Aorta (tissue), 5 donors: ENCODE measurements at regions of chr17 and their contacts with region 1.

Region 1: DNA sequence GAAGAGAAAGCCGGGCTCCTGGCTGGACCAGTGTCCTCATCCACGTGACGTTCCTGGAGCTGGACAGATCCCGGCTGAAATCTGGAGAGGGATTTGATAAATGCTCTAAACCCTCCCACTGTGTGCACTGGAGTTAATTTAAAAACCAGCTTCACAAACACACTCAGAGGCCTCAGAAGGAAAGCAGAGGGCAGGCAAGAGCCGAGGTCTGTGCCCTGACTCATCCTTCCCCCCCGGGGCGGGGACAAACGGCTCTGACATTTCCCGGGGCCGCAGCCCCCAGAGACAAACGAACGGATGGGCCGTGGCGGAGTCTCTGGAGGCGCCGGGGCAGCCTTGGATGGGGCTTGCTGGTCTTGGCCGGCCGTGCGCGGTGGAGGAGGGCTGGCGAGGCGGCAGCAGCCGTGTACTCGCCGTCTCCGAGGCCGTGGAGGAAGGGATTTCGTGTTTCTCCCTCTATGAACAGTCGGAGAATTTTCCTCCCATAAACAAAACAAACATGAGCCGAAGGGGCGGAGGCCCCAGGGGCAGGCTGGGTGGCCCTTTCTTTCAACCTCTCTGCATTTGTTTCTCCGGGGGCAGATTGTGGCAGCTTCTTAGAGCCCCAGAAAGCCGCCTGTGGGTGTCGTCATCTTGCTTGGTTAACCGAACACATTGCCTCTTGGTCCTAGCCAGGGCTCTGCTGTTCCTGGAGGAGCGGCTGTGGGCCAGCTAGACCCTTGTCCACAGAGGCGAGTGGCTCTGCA is 94.3 kb downstream of the NTN1 start:
- DNase-seq: peak; percentile 84 to 95
- ATAC-seq: peak; percentile 90
- H3K4me3 ChIP-seq: peak overlapping the region in 1 of 2 donors; percentile 41
- H3K27ac ChIP-seq: peak overlapping the region; percentile 54 to 96
- H3K4me1 ChIP-seq: no peaks in the 10 kb centered on the region
- H3K27me3 ChIP-seq: no peaks in the 10 kb centered on the region

Region 2: GRCh38 chr17:9021158-9021991 is 94.2 kb before region 1 on chr17 and contains the start of gene NTN1:
- intact Hi-C with region 1: no loop called
- DNase-seq: peak; percentile 66 to 89
- ATAC-seq: peak; percentile 85
- H3K4me3 ChIP-seq: peak within 1 kb of the TSS; percentile 62 to 95
- H3K27ac ChIP-seq: peak within 1 kb of the TSS; percentile 19 to 31
- H3K4me1 ChIP-seq: no peaks in the 10 kb centered on the region
- H3K27me3 ChIP-seq: no peaks in the 10 kb centered on the region
- total RNA-seq, gene NTN1: 56.5 to 90.4 TPM

Region 3: DNA sequence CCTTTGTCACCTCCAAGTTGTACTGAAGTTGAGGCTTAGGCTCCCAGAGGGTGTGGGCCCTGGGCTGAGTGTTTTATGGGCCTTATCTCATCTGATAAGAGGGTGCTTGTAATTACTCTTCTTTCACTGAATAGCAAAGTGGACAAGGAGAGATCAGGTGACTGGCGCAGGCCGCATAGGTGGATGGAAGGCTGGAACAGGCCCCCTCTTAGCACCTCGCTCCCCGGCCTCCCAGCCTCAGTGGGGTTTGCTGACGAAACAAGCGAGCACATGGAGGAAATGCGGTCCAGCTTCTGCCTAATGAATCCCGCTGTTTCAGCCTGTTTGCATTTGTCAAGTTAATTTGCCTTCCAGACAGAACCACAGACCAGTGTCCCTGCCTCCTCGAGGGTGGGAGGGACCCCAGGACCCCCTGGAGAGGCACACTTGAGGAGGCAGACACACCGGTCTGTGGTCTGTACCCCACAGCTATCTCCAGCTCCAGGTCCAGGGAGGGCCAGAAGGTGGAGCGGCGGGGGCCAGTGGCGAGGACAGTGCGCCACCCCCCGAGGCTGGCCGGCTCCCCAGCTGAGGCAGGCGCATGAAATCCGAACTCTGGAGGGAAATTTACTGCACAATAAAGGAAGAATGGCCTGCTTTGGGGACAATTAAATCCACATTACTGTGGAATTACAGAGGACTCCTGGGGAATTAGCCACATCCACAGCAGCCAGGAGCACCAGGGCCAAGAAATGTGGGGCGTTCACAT is 29.1 kb after region 1 on chr17:
- intact Hi-C with region 1: loop called in 1 of 2 experiments (anchors 2 kb)
- DNase-seq: no peak
- ATAC-seq: no peak
- H3K4me3 ChIP-seq: no peak overlapping the region
- H3K27ac ChIP-seq: no peak overlapping the region
- H3K4me1 ChIP-seq: peaks cover 0 to 6% of the 10 kb centered on the region in 2 donors
- H3K27me3 ChIP-seq: no peaks in the 10 kb centered on the region

Region 4: GRCh38 chr17:9150446-9151090 is 34.9 kb after region 1 on chr17:
- intact Hi-C with region 1: loop called (anchors 2 to 5 kb)
- DNase-seq: peak in 1 of 2 donors; percentile 83
- ATAC-seq: peak; percentile 62
- H3K4me3 ChIP-seq: no peak overlapping the region
- H3K27ac ChIP-seq: peak overlapping the region; percentile 17 to 72
- H3K4me1 ChIP-seq: peaks cover 0 to 6% of the 10 kb centered on the region in 2 donors
- H3K27me3 ChIP-seq: no peaks in the 10 kb centered on the region

Region 5: DNA sequence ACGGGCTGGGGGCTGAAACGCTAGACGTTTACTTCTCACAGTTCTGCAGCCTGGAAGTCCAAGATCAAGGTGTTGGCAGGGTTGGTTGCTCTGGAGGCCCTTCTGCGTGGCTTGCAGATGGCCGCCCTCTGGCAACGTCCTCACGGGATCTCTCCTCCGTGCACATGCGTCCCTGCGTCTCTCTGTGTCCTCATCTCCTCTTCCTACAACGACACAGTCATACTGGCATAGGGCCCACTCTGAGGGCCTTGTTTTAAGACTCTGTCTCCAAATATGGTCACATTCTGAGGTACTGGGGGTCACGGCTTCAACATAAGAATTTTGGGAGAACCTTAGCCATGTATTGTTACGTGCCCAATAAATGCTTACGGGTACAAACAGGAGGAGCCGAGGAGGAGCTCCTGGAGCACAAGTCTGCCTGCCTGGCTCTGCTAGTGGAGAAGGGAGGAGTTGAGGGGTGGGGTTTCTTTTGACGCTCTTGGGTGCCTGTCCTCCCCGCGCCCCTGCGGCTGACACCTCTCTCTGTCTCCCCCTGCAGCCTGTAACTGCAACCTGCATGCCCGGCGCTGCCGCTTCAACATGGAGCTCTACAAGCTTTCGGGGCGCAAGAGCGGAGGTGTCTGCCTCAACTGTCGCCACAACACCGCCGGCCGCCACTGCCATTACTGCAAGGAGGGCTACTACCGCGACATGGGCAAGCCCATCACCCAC is 46.8 kb after region 1 on chr17:
- intact Hi-C with region 1: loop called in 1 of 2 experiments (anchors 5 kb)
- DNase-seq: peak; percentile 87 to 89
- ATAC-seq: peak; percentile 82
- H3K4me3 ChIP-seq: peak overlapping the region in 1 of 2 donors; percentile 23
- H3K27ac ChIP-seq: peak overlapping the region; percentile 94 to 97
- H3K4me1 ChIP-seq: peaks cover 0 to 7% of the 10 kb centered on the region in 2 donors
- H3K27me3 ChIP-seq: no peaks in the 10 kb centered on the region

Region 6: DNA sequence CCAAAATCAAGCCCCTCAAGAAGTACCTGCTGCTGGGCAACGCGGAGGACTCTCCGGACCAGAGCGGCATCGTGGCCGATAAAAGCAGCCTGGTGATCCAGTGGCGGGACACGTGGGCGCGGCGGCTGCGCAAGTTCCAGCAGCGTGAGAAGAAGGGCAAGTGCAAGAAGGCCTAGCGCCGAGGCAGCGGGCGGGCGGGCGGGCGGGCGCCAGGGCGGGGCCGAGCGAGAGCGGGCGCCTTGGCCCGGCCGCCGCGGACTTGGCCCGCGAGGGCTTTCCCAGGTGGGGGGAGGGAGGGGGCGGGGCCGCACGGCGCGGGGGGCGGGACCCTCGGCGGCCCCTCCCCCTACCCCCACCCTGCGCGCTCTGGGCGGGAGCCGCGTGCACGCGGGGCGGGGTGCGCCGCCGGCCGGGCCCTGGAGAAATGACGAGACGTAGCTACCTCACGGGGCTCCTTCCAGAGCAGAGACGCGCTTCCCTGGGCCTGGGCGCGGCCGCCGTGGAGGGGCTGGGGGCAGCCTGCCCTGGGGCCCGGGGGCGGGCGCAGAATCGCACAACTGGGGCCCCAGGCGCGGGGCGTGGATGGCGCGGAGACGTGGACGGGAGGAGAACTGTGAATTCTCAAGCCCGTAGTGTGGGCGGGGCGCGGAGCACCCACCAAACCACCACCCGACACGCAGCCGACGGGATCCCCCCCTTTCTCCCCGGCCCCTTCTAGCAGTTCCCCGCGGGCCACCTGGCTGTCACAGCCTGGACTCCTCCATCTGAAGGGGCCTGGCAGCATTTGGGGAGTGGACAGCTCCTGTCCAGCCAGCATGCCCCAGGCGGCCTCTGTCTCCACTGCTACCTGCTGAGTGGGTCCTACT is 124.4 kb after region 1 on chr17:
- intact Hi-C with region 1: loop called in 1 of 2 experiments (anchors 10 kb)
- DNase-seq: peak; percentile 88 to 94
- ATAC-seq: peak; percentile 88
- H3K4me3 ChIP-seq: peak overlapping the region; percentile 20 to 54
- H3K27ac ChIP-seq: peak overlapping the region; percentile 99 to 100
- H3K4me1 ChIP-seq: peaks cover 0 to 4% of the 10 kb centered on the region in 2 donors
- H3K27me3 ChIP-seq: no peaks in the 10 kb centered on the region

Region 7: GRCh38 chr17:9346296-9346926 is 230.8 kb after region 1 on chr17:
- intact Hi-C with region 1: no loop called
- DNase-seq: no peak
- ATAC-seq: no peak
- H3K4me3 ChIP-seq: no peak overlapping the region
- H3K27ac ChIP-seq: no peak overlapping the region
- H3K4me1 ChIP-seq: no peaks in the 10 kb centered on the region
- H3K27me3 ChIP-seq: no peaks in the 10 kb centered on the region